Activated T-helper 1 cell treated with anti-CD3 and anti-CD28 coated beads, Interleukin-12 subunit alpha, Interleukin-12 subunit beta, Interleukin-2, Interleukin-4 antibody, amounts not matched to agents 30 ng/mL and 10 ng/mL and 1 ng/mL, durations not matched to agents 14 hours and 24 hours and 36 hours (primary cell): ENCODE measurements at regions of chr19 and their contacts with region 1.

Region 1: GRCh38 chr19:46076951-46077816 is 36.4 kb upstream of the IGFL4 start:
- DNase-seq: no peak
- H3K4me3 Mint-ChIP-seq: no peak overlapping the region
- H3K27ac Mint-ChIP-seq: no peak overlapping the region
- H3K4me1 Mint-ChIP-seq: peaks cover 4% of the 10 kb centered on the region
- H3K27me3 Mint-ChIP-seq: peaks cover 64% of the 10 kb centered on the region

Region 2: DNA sequence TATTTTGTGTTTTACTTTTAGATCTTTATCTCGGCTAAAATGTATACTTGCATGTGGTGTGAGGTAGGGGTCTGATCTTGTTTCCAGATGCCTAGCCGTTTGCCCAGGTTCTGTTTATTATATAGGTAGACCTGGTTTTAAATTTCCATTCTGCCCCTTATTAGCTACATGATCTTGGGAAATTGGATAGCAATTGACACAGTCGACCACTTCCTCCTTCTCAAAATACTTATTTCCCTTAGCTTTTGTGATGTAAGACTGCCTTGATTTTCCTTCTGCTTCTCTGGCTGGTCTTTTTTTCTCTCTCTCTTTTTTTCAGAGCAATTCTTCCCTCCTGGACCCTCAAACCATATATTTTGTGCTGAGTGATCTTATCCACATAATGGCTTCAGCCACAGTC is 51.3 kb before region 1 on chr19:
- intact Hi-C with region 1: loop called (anchors 5 kb)
- DNase-seq: no peak
- H3K4me3 Mint-ChIP-seq: no peak overlapping the region
- H3K27ac Mint-ChIP-seq: no peak overlapping the region
- H3K4me1 Mint-ChIP-seq: peaks cover 15% of the 10 kb centered on the region
- H3K27me3 Mint-ChIP-seq: peaks cover 26% of the 10 kb centered on the region

Region 3: DNA sequence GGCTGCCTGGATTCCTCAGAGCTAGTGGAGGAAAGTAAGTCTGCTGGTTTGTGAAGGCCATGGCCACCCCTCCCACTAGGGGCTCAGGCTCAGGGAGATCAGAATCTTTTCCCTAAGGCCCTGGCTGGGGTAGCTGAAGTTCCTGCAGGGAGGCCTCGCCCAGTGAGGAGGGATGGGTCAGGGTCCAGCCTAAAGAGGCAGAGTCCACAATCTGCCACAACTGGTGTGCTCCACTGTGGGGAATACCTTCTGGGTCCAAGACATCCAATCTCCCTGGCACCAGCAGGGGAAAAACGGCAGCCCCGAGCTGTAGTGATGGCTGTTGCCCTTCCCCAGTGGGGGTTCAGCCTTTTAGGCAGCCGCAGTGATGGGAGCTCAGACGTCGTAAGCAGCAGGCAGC is 24.1 kb after region 1 on chr19:
- intact Hi-C with region 1: no loop called
- DNase-seq: no peak
- H3K4me3 Mint-ChIP-seq: no peak overlapping the region
- H3K27ac Mint-ChIP-seq: no peak overlapping the region
- H3K4me1 Mint-ChIP-seq: no peaks in the 10 kb centered on the region
- H3K27me3 Mint-ChIP-seq: peaks cover 9% of the 10 kb centered on the region

Region 4: DNA sequence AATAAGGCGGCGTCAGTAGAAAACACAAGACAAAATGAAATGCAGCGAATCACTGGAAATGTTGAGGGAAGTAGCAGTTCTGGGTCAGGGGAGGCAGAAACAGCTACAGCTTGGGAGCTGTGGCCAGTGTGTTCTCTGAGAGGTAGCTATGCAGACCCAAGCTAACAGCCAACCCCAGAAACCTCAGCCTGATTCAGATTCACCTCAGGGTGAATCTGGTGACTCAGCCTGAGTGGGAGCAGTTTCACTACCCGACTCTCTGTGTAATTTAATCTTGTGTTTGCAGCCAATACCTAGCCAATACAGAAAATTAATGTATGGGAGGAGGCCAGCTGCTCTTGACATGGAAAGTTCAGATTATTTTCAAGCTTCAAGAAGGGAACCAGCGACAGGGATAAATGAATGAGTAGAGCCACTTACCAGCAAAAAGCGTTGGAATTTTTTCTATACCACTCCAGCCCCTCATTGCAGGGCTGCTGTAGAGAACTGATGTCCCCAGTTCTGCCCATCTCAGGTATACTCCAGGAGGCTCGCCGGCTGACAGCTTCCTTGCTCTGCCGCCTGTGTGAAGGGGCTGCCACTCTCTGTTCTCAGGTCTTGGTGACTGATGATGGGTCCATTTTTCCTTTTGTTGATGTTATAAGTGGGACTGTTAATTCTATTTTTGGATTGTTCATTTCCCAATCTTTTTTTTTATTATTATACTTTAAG is 38.4 kb after region 1 on chr19:
- intact Hi-C with region 1: loop called (anchors 1 kb)
- DNase-seq: no peak
- H3K4me3 Mint-ChIP-seq: peak overlapping the region; percentile 12
- H3K27ac Mint-ChIP-seq: no peak overlapping the region
- H3K4me1 Mint-ChIP-seq: peaks cover 13% of the 10 kb centered on the region
- H3K27me3 Mint-ChIP-seq: peaks cover 22% of the 10 kb centered on the region

Region 5: GRCh38 chr19:46189971-46190888 is 113.0 kb after region 1 on chr19:
- intact Hi-C with region 1: loop called (anchors 1 kb)
- DNase-seq: no peak
- H3K4me3 Mint-ChIP-seq: no peak overlapping the region
- H3K27ac Mint-ChIP-seq: no peak overlapping the region
- H3K4me1 Mint-ChIP-seq: peaks cover 5% of the 10 kb centered on the region
- H3K27me3 Mint-ChIP-seq: peaks cover 27% of the 10 kb centered on the region

Region 6: GRCh38 chr19:46265217-46265828 is 188.1 kb after region 1 on chr19:
- intact Hi-C with region 1: loop called (anchors 1 kb)
- DNase-seq: peak; percentile 61
- H3K4me3 Mint-ChIP-seq: no peak overlapping the region
- H3K27ac Mint-ChIP-seq: no peak overlapping the region
- H3K4me1 Mint-ChIP-seq: peaks cover 10% of the 10 kb centered on the region
- H3K27me3 Mint-ChIP-seq: peaks cover 58% of the 10 kb centered on the region

Region 7: DNA sequence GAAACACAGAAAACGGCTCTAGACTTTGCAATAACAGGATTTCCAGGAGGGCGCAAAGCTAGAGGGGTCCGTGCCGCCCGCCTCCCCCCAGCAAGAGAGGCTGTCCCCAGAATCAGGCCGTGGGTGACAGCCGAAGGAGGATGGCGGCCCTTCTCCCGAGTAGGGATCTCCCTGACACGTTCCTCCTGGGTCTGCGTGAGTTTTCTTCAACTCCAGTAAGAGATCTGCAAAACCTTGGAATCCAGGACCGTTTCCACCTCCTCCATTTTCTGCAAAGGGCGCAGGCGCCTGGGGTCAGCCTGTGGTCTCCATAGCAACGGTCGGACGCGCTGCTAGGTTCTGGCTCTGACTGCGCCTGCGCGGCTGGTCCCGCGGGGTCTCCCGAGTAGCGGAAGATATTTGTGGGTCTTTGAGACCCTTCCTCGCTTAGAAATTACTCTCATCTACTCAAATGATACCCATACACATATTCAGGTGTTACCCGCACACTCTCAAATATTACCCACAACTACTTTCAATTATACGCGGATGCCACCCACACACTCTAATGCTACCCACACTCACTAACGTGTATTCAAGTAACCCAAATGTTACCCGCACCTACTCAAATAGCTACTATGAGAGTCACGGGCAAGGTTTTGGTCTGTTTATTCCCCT is 349.4 kb after region 1 on chr19:
- intact Hi-C with region 1: loop called (anchors 10 kb)
- DNase-seq: peak; percentile 3
- H3K4me3 Mint-ChIP-seq: peak overlapping the region; percentile 9
- H3K27ac Mint-ChIP-seq: peak overlapping the region; percentile 3
- H3K4me1 Mint-ChIP-seq: peaks cover 38% of the 10 kb centered on the region
- H3K27me3 Mint-ChIP-seq: peaks cover 70% of the 10 kb centered on the region

Region 8: GRCh38 chr19:46493236-46494145 is 416.3 kb after region 1 on chr19:
- intact Hi-C with region 1: loop called (anchors 2 kb)
- DNase-seq: no peak
- H3K4me3 Mint-ChIP-seq: peak overlapping the region; percentile 33
- H3K27ac Mint-ChIP-seq: no peak overlapping the region
- H3K4me1 Mint-ChIP-seq: peaks cover 5% of the 10 kb centered on the region
- H3K27me3 Mint-ChIP-seq: peaks cover 77% of the 10 kb centered on the region